ENCODE measurements at regions of chr17 and their contacts with region 1.

Region 1: DNA sequence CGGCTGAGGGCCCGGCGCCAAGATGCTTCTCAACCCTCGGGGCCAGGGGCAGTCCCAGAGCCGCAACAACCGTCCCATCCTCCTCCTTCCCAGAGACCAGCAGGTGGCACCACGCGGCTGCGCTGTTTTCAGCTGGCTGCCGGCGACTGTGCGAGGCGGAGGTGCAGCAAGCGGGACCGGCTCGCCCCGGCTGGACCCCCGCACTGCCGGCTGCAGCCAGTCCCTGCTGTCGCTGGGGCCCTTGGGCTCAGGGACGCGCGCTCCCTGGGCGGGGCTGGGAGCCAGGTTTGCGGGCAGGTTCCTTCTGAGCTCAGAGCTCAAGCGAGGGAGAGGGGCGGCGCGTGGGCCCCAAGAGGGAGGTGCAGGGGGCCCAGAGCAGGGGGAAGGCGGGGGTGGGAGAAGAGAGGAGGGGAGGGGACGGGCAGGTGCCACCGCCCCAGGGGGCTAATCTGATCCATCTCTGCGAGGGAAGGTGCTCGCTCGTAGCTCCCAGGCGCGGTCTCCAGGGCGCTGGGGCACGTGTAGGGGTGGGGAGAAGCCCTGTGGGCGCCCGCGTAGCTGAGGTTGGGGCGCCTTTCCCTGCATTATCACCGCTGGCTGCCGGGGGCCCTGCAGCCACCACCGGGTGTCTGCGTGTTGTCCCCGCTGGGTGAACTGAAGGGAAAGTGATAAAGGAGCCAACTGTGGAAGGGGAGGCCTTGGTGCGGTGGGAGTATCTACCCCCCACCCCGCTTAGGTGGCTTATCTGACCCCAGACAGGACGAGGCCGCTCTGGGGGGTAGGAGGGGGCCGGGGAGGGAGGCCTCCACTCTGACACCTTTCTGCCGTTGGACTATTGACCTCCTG is 24.2 kb downstream of the STAT5A start:
- DNase-seq: peak; percentile 91

Region 2: DNA sequence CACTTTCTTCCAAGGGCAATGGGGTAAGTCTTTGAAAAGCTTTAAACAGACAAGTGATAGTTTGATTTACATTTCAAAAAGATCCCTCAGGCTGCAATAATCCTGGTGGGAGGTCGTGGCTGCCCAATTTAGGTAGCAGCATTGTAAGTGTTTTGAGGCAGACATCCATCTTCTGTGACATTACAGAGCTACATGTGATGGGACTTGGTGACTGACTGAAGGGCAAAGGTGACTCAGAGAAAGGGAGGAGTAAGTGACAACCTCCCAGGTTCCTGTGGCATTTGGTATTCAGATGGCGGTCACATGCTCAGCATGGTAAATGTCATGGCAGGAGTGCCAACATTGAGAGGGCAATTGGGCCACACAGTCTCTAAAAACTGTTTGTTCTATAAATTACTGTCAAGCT is 49.3 kb after region 1 on chr17:
- in situ Hi-C with region 1: no loop called
- DNase-seq: no peak

Region 3: DNA sequence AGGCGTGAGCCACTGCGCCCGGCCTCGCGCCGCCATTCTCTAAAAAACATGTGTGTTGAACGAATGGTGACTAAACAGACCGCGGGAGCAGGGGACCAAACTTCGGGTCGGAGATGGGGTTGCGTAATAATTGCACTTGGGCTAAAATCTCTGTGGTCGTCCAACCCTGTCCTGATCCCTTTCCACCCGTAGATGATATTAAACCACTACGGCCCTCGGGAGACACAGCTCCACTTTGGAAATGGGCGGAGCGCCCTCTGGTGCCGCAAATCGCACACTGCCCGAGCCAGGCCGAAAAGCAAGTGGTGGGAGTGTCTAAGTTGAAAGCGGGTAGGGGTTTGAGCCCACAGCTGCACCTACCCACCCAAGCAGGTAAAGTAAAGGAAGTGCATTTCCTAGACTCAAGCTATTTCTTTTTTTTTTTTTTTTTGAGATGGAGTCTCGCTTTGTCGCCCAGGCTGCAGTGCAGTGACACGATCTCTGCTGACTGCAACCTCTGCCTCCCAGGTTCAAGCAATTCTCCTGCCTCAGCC is 93.5 kb after region 1 on chr17:
- in situ Hi-C with region 1: loop called (anchors 10 kb)
- DNase-seq: peak; percentile 89